ENCODE measurements at regions of chr19 and their contacts with region 1.

Region 1: DNA sequence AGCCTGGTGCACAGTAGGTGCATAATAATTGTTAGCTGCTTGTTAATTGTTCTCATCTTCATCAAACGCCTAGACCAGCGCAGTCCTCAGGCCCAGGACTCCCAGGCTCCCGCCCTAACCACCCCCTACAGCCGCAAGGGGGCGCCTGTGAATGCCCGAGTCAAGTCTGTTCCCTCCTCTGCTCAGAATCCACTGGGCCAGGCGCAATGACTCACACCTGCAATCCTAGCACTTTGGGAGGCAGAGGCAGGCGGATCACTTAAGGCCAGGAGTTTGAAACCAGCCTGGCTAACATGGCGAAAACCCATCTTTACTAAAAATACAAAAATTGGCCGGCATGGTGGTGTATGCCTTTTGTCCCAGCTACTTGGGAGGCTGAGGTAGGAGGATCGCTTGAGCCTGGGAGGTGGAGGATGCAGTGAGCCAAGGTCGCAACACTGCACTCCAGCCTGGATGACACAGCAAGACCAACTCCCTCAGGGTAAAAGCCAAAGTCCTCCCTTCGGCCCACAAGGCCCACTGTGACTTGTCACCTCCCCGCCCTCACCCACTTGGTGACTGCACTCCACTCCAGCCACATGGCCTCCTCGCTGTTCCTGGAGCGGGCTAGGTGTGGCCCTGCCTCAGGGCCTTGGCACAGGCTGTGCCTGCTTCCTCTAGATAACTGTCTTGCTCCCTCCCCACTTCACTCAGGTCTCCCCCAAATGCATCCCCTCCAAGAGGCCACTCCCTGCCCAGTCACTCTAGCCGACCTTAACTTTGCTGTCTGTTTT is 9.1 kb downstream of the ZNF653 start:
- DNase-seq: peak; percentile 69 to 86 (median 85)
- ATAC-seq: peak; percentile 44 to 76
- H3K4me3 ChIP-seq: no peak overlapping the region
- H3K27ac ChIP-seq: no peak overlapping the region
- H3K4me1 ChIP-seq: no peaks in the 10 kb centered on the region
- H3K27me3 ChIP-seq: no peaks in the 10 kb centered on the region

Region 2: DNA sequence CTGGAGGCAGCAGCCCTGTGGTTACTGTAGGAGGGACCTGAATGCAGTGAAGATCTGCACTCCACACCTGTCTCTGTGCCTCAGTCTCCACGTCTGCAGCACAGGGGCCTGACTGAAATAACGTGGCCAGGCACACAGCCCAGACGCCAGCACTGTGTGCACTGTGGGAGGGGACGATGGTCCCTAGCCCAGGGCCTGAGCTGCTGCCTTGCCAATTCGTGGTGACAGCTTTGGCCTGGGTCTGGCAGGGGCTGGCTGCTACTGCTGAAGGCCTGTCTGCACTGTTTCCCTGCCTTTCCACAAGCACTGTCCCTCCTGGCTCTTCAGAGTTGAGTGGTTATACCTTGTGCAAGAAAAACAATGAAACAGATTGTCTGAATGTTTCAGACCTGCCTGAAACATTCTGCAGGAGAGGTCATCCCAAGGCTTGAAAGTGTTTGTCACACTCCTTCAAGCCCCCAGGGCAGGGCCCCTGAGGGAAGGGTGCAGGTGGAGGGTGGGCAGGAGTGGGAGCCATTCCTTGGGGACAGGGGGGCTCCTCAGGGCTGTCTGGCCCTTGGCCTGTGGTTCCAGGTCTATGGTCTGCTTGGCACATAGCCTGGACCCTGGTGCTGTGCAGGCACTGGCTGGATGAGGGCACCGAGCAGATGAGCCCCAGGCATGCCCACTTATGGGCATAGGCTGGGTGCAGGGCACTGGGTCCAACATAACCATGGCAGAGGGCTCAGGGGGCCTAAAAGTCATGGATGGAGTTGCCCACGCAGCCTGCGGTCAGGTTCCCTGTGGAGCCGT is 446.1 kb before region 1 on chr19:
- intact Hi-C with region 1: no loop called
- DNase-seq: no peak
- ATAC-seq: peak; percentile 26 to 48
- H3K4me3 ChIP-seq: no peak overlapping the region
- H3K27ac ChIP-seq: no peak overlapping the region
- H3K4me1 ChIP-seq: no peaks in the 10 kb centered on the region
- H3K27me3 ChIP-seq: no peaks in the 10 kb centered on the region

Region 3: DNA sequence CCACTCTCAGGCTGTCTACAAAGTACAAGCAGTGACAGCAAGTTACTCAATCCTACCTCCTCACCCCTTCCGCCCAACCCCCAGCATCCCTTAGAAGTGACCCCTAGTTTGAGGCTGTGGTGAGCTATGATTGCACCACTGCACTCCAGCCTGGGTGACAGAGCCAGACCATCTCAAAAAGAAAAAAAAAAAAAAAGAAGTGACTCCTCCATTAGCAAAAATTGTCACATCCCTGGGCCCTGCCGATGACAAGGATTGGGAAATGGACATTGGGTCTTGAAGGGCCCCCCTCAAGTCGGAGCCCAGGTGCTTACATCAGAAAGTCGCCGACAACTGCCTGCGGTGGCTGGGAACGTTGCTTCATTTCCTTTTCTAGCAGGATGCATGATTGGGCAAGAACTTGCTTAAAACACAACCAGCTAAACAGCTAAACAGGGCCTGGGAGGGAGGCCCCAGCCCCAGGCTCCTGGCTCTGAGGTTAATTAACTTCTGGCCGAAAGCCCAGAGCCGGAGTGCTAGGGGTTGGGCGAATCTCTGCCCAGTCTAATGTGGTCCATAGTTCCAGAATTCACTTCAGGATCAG is 172.4 kb before region 1 on chr19:
- intact Hi-C with region 1: no loop called
- DNase-seq: peak; percentile 79 to 90 (median 88)
- ATAC-seq: peak; percentile 94 to 95
- H3K4me3 ChIP-seq: no peak overlapping the region
- H3K27ac ChIP-seq: peak overlapping the region; percentile 68
- H3K4me1 ChIP-seq: peaks cover 3% of the 10 kb centered on the region
- H3K27me3 ChIP-seq: no peaks in the 10 kb centered on the region

Region 4: GRCh38 chr19:11587302-11587974 is 90.9 kb after region 1 on chr19:
- intact Hi-C with region 1: loop called in 1 of 4 experiments (anchors 5 kb)
- DNase-seq: peak; percentile 76 to 90 (median 90)
- ATAC-seq: peak; percentile 71 to 84
- H3K4me3 ChIP-seq: no peak overlapping the region
- H3K27ac ChIP-seq: no peak overlapping the region
- H3K4me1 ChIP-seq: no peaks in the 10 kb centered on the region
- H3K27me3 ChIP-seq: no peaks in the 10 kb centered on the region